Activated CD4-positive, alpha-beta T cell treated with anti-CD3 and anti-CD28 coated beads, Interleukin-2, amount 10 ng/mL, durations not matched to agents 24 days and 14 days (primary cell): ENCODE measurements at regions of chr13 and their contacts with region 1.

Region 1: DNA sequence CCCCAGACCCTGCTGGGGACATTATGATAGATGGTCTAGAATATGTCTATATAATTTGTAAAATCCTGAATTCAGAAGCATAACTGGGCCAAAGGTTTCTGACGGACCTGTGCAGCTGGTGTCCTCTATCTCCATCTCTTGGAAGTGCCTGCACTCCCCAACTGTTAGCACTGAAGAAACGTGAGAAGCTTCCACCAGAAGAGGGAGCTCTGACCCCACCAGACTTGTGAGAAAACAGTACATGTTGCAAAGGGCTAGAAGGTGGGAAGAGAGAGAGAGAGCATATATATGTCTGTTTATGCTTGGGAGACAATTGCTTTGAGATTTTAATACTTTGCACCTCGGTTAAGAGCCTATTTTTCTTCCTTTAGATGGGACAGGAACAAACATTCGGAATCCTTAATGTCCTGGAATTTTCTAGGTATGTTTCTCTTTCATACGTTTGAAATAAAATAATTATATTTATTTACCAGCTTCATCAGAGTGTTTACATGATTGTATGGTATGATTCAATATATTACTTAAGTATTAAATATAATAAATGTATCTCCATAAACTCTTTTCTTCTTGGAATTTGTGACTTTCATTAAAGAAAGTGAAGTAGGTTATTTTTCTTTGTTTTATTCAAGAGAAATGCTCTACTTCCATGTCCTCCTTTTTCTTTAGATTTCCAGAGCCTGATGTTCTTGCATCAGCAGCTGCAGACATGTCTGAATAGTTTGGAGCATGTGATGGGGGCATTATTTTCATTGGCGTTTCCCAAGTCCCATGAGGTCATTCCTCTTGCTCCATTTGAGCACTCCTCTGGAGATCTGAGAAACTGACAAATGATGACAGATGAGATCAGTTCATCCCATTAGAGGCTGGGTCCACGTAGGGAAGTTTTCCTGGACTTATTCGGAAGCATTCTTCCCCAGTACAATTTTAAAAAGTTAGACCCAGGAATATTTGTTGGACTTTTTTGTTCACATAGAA is 202.9 kb downstream of the ATP8A2 start:
- DNase-seq: peak; percentile 94
- H3K4me3 Mint-ChIP-seq: no peak overlapping the region
- H3K27ac Mint-ChIP-seq: no peak overlapping the region
- H3K4me1 Mint-ChIP-seq: peaks cover 4% of the 10 kb centered on the region
- H3K27me3 Mint-ChIP-seq: peaks cover 35% of the 10 kb centered on the region

Region 2: GRCh38 chr13:25588336-25589060 is 13.8 kb after region 1 on chr13:
- intact Hi-C with region 1: no loop called
- DNase-seq: no peak
- H3K4me3 Mint-ChIP-seq: no peak overlapping the region
- H3K27ac Mint-ChIP-seq: no peak overlapping the region
- H3K4me1 Mint-ChIP-seq: no peaks in the 10 kb centered on the region
- H3K27me3 Mint-ChIP-seq: peaks cover 25% of the 10 kb centered on the region

Region 3: DNA sequence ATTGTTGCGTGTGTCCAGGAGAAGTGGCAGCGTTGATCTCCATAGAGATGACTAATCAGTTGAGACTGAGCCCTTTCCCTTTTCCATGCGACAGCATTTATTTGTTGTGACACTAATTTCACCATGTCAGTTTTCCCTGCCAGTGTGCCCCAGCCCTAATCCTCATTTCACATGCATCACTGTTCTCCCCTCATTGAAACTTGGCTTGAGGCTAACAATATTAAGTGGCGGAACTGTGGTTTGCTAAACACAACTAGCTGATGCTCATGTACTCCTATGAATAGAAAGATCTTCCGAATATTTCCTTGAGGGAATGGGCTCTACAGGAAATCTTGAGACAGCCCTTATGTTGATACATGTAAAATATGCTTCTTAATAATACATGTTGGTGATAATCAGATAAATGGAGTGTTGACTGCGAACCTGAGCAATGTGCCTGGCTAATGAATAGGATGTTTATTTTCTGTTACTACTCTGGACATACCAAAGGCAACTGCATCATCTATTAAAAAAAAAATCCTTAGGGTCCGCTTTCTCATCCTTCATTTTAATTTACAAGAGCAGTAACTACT is 55.7 kb after region 1 on chr13:
- intact Hi-C with region 1: no loop called
- DNase-seq: no peak
- H3K4me3 Mint-ChIP-seq: no peak overlapping the region
- H3K27ac Mint-ChIP-seq: no peak overlapping the region
- H3K4me1 Mint-ChIP-seq: no peaks in the 10 kb centered on the region
- H3K27me3 Mint-ChIP-seq: peaks cover 4% of the 10 kb centered on the region

Region 4: DNA sequence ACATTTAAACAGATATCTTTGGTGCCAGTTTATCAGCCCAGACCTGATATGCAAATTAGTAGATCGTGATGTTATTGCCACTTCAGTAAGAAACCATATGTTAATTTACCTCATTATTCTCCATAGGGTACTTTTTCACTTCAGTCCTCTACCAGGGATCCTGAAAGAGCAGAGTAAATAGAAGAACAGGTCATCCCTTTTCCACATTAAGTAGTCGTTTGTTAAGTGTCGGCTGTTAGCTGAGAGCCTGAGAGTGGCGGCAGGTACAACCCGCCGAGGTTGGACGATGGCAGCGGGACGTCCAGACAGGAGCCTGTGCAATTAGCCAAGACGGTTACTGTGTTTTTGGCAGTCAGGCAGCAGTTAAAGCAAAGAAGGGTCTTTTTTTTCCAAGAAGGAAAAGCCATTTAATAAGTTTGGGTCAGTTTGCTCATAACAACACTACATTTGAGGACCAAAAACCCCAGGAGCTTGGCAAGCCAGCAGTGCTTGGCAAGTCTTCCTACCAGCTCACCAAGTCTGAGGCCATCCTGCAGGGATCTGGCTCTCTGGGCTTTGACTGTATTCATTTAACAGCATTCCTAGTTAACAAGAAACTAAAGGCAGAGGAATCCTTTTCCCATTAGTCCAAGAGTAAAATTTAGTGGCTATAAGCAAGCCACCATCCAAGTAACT is 245.3 kb after region 1 on chr13:
- intact Hi-C with region 1: loop called (anchors 10 kb)
- DNase-seq: no peak
- H3K4me3 Mint-ChIP-seq: no peak overlapping the region
- H3K27ac Mint-ChIP-seq: no peak overlapping the region
- H3K4me1 Mint-ChIP-seq: peaks cover 2% of the 10 kb centered on the region
- H3K27me3 Mint-ChIP-seq: peaks cover 5% of the 10 kb centered on the region

Region 5: DNA sequence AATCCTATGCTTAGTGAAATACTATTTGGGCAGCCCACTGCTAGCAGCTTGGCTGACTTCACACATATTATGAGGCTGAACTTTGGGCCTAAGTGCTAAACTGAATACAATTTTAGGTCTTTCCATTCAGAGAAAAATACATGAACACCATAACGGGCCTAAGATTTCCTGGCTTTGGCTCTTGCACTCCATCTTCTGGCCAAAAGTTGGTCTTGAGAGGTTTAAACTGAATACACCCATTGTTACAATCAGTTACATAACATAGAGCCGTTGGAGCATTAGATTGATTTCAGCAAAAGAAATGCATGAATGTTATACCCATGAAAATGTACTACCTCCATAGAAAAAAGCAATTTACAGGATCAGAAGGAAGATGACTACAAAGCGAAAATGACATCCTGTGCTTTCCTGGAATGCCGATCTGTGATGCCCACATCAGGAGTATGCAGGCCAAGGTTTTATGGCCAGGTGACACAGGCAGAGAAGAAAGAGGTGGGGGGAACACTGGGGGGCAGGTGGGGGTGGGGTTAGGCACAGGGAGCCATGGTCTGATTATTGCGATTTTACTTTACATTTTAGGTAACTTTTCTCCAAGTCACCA is 488.2 kb after region 1 on chr13:
- intact Hi-C with region 1: loop called (anchors 1 kb)
- DNase-seq: peak; percentile 86
- H3K4me3 Mint-ChIP-seq: no peak overlapping the region
- H3K27ac Mint-ChIP-seq: no peak overlapping the region
- H3K4me1 Mint-ChIP-seq: peaks cover 15% of the 10 kb centered on the region
- H3K27me3 Mint-ChIP-seq: peaks cover 15% of the 10 kb centered on the region

Region 6: GRCh38 chr13:26071691-26072090 is 497.0 kb after region 1 on chr13:
- intact Hi-C with region 1: loop called (anchors 1 kb)
- DNase-seq: peak; percentile 40
- H3K4me3 Mint-ChIP-seq: no peak overlapping the region
- H3K27ac Mint-ChIP-seq: no peak overlapping the region
- H3K4me1 Mint-ChIP-seq: no peaks in the 10 kb centered on the region
- H3K27me3 Mint-ChIP-seq: peaks cover 21% of the 10 kb centered on the region